ENCODE measurements at regions of chr12 and their contacts with region 1.

Region 1: DNA sequence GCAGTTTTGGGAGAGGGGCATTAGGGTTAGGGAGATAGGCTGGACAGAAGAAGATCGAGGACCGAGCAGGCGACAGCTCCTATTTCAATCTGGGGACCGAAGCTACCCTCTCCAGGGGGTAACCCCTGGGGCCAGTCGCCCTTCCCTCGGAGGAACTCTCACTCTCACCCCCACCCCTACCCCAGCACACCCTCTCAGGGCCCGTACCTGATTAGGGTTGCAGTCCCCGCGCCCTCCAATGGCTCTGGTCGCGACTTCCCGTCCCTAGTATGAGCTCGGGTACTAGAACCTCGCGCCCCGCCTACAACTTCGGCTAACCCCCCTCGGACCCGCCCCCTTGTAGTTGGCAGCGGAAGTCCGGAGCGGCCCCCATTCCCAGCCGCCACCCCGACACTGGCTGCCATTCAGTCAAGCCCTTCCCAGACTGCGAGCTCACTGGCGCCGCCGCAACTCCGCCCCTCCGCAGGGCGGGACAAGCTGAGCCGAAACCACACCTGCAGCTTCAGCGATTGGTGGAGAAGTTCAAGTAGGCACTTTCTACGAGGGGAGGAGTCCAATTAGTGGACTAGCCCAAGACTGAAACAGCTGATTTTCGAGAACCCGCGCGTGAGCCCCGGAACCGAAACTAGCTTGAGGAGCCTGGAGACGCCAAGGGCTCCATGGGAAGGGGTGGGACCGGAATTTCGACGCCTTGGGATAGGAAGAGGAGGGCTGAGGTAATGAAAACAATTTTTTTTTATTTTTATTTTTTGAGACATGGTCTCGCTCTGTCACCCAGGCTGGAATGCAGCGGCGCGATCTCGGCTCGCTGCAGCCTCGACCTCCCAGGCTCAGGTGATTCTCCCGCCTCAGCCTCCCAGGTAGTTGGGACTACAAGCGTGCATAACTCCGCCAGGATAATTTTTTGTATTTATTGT is at the start of gene STAT2:
- DNase-seq: peak; percentile 99
- ATAC-seq: peak; percentile 98
- H3K4me3 ChIP-seq: peak within 1 kb of the TSS; percentile 93
- H3K27ac ChIP-seq: peak within 1 kb of the TSS; percentile 89
- H3K4me1 ChIP-seq: peaks cover 5% of the 10 kb centered on the region; the same call in 1 of the 2 replicates
- H3K27me3 ChIP-seq: no peaks in the 10 kb centered on the region
- CTCF ChIP-seq: no peak
- EP300 ChIP-seq: no peak
- POLR2A ChIP-seq: peak; percentile 90
- RAD21 ChIP-seq: no peak
- polyA plus RNA-seq, gene STAT2: 16.9 to 23.5 TPM

Region 2: DNA sequence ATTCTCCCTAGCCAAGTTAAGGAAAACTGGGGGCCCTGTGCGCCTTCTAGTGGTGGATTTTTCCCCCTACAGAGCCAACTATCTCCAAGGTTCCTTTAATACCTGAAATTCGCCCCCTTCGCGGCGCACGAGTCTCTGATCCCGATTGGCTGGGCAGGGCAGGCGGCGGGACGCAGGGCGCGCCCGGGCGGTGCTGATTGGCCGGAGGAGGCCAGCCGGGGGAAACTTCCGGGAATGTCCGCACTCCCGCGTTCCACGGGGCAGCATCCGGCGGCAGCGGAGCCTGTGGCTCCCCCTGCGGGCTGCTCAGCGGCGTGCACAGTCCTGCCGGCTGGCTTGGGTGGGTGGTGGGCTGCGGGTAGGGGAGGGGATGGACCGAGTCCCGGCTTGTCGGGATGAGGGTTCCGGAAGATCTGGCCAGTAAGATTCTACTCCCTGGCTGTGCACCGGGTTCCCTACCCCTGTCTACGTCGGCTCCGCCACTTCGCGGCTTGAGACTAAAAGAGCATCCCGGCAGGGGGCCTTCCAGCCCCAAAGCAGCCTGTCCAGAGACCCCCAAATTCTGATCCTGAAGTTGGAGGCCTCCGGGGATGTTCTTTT is 135.9 kb before region 1 on chr12 and contains the start of gene NABP2:
- CTCF ChIA-PET with region 1: interaction called, 6 read pairs
- POLR2A ChIA-PET with region 1: interaction called, 20 read pairs
- RAD21 ChIA-PET with region 1: interaction called, 7 read pairs
- SMC1A ChIA-PET with region 1: interaction called, 4 read pairs
- in situ Hi-C with region 1: no loop called
- intact Hi-C with region 1: no loop called
- DNase-seq: peak; percentile 89
- ATAC-seq: peak; percentile 90
- H3K4me3 ChIP-seq: peak within 1 kb of the TSS; percentile 97
- H3K27ac ChIP-seq: peak within 1 kb of the TSS; percentile 65
- H3K4me1 ChIP-seq: 0 out of 2 replicates have a peak, but pooled peaks cover 3% of the 10 kb centered on the region
- H3K27me3 ChIP-seq: no peaks in the 10 kb centered on the region
- CTCF ChIP-seq: peak; percentile 65 to 86 (median 85)
- EP300 ChIP-seq: 0 out of 4 replicates have a peak, but pooled peaks of 1 of the 2 experiments have one; percentile 7
- POLR2A ChIP-seq: peak; percentile 78
- RAD21 ChIP-seq: peak; percentile 49; the same call in 1 of the 2 replicates
- polyA plus RNA-seq, gene NABP2: 20.7 to 29.5 TPM

Region 3: GRCh38 chr12:56333679-56334489 is 26.2 kb before region 1 on chr12 and contains the start of gene PAN2:
- CTCF ChIA-PET with region 1: interaction called, 21 read pairs
- POLR2A ChIA-PET with region 1: interaction called, 140 read pairs
- RAD21 ChIA-PET with region 1: interaction called, 47 read pairs
- SMC1A ChIA-PET with region 1: interaction called, 28 read pairs
- in situ Hi-C with region 1: no loop called
- intact Hi-C with region 1: loop called (anchors 1 kb)
- DNase-seq: peak; percentile 89
- ATAC-seq: peak; percentile 97
- H3K4me3 ChIP-seq: peak within 1 kb of the TSS; percentile 97
- H3K27ac ChIP-seq: peak within 1 kb of the TSS; percentile 99
- H3K4me1 ChIP-seq: peaks cover 24% of the 10 kb centered on the region
- H3K27me3 ChIP-seq: no peaks in the 10 kb centered on the region
- CTCF ChIP-seq: peak; percentile 37 to 47 (median 43); a peak in 5 of 6 replicates
- EP300 ChIP-seq: 0 out of 4 replicates have a peak, but pooled peaks have one; percentile 6 to 29
- POLR2A ChIP-seq: peak; percentile 73
- RAD21 ChIP-seq: peak; percentile 33; the same call in 1 of the 2 replicates
- polyA plus RNA-seq, gene PAN2: 14.4 to 14.5 TPM

Region 4: DNA sequence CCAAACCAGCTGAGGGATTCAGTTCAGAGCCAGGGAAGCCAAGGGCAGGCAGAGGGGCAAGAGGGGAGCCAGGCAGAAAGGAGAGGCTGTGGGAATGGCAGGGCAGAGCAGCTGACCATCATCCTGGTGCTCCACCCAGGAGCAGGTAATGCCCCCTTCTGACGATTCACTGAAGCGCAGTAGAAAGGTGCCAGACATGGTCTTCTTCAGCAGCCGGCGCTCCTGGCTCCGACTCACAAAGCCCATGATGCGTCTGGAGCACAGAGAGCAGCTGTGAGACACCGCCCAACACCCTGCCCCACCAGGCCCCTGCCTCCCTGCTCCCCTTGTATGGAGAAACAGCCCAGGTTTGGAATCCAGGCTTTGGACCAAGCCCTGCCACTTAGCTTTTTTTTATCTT is 13.4 kb before region 1 on chr12:
- CTCF ChIA-PET with region 1: interaction called, 8 read pairs
- POLR2A ChIA-PET with region 1: interaction called, 140 read pairs
- RAD21 ChIA-PET with region 1: interaction called, 7 read pairs
- SMC1A ChIA-PET with region 1: interaction called, 18 read pairs
- in situ Hi-C with region 1: no loop called
- intact Hi-C with region 1: no loop called
- DNase-seq: no peak
- ATAC-seq: peak; percentile 40
- H3K4me3 ChIP-seq: no peak overlapping the region
- H3K27ac ChIP-seq: no peak overlapping the region
- H3K4me1 ChIP-seq: peaks cover 3% of the 10 kb centered on the region
- H3K27me3 ChIP-seq: no peaks in the 10 kb centered on the region
- CTCF ChIP-seq: peak in 2 of 3 experiments; percentile 5 to 17; a peak in 1 of 6 replicates
- EP300 ChIP-seq: no peak
- POLR2A ChIP-seq: 0 out of 2 replicates have a peak, but pooled peaks have one; percentile 0
- RAD21 ChIP-seq: no peak

Region 5: GRCh38 chr12:56448860-56449621 is 88.9 kb after region 1 on chr12 and contains the start of gene TIMELESS:
- CTCF ChIA-PET with region 1: interaction called, 9 read pairs
- POLR2A ChIA-PET with region 1: interaction called, 47 read pairs
- RAD21 ChIA-PET with region 1: interaction called, 26 read pairs
- SMC1A ChIA-PET with region 1: interaction called, 27 read pairs
- in situ Hi-C with region 1: no loop called
- intact Hi-C with region 1: loop called (anchors 5 kb)
- DNase-seq: peak; percentile 77
- ATAC-seq: peak; percentile 98
- H3K4me3 ChIP-seq: peak within 1 kb of the TSS; percentile 91
- H3K27ac ChIP-seq: peak within 1 kb of the TSS; percentile 75
- H3K4me1 ChIP-seq: no peaks in the 10 kb centered on the region
- H3K27me3 ChIP-seq: no peaks in the 10 kb centered on the region
- CTCF ChIP-seq: no peak
- EP300 ChIP-seq: no peak
- POLR2A ChIP-seq: peak; percentile 91
- RAD21 ChIP-seq: no peak
- polyA plus RNA-seq, gene TIMELESS: 10.4 to 20.5 TPM

Region 6: GRCh38 chr12:56484566-56484965 is 124.5 kb after region 1 on chr12:
- CTCF ChIA-PET with region 1: no interaction called
- POLR2A ChIA-PET with region 1: no interaction called
- RAD21 ChIA-PET with region 1: no interaction called
- SMC1A ChIA-PET with region 1: no interaction called
- in situ Hi-C with region 1: no loop called
- intact Hi-C with region 1: no loop called
- DNase-seq: no peak
- ATAC-seq: no peak
- H3K4me3 ChIP-seq: no peak overlapping the region
- H3K27ac ChIP-seq: no peak overlapping the region
- H3K4me1 ChIP-seq: peaks cover 12% of the 10 kb centered on the region
- H3K27me3 ChIP-seq: peaks cover 0 to 2% of the 10 kb centered on the region in 2 experiments; a peak in 2 of 4 replicates
- CTCF ChIP-seq: no peak
- EP300 ChIP-seq: no peak
- POLR2A ChIP-seq: no peak
- RAD21 ChIP-seq: no peak